ENCODE measurements at regions of chr7 and their contacts with region 1.

Region 1: DNA sequence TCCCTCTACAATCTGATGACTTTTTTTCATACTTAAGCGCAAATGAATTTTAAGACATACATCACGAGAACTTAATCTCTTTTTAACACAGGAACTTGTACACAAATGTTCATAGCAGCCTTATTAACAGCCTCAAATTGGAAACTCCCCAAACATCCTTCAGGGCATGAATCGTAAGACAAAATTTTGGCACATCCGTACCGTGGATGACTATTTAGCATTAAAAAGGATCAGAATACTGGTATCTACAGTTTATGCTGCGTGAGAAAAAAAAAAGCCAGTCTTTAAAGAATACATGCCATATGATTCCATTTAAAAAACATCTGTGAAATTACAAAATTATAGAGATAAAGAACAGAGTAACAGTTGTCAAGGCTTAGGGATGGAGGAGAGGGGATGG is 46.8 kb downstream of the PDE1C start:
- DNase-seq: no peak
- H3K4me3 ChIP-seq: no peak overlapping the region
- H3K27ac ChIP-seq: no peak overlapping the region
- H3K4me1 ChIP-seq: no peaks in the 10 kb centered on the region
- H3K27me3 ChIP-seq: no peaks in the 10 kb centered on the region
- CTCF ChIP-seq: no peak
- POLR2A ChIP-seq: no peak

Region 2: DNA sequence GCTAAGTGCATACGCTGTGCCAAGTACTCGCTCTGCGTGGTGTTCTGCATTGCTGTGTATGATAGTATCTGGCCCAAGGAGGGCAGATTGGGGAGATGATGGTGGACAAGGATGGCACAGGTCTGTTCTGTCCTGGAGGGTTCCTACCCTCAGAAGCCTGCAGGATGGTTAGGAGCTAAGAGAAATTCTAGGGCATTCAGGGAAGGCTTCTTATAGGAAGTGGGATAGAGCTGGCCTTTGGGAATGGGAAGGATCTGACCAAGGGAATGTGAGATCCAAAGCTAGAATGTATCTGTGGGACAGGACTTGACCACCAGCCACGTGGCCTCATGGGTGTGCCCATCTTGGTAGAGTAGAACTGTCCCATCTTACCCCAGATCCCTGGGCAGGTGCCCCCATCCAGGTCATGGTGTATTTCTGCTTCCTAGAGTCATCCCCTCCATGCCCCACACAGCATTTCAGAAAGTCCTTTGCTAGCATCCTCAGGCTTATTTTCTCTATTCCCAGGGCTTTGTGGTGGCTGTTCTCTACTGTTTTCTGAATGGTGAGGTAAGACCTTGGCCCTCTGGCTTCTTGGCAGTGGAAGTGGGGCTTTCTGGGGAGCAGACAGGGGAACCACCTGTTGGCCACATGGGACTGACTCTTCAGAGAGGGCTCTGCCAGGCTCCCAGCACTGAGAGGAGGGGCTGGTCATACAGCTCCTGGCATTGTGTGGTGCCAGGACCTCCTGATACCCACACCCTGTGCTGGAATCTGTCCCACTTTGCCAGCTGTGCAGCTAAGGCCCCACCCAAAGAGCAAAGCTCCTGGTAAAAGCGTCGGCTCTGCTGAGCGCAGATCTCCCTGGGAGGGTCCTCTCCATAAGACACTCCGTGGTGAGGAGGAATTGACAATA is 918.8 kb before region 1 on chr7:
- intact Hi-C with region 1: loop called (anchors 5 kb)
- DNase-seq: no peak
- H3K4me3 ChIP-seq: no peak overlapping the region
- H3K27ac ChIP-seq: no peak overlapping the region
- H3K4me1 ChIP-seq: no peaks in the 10 kb centered on the region
- H3K27me3 ChIP-seq: no peaks in the 10 kb centered on the region
- CTCF ChIP-seq: no peak
- POLR2A ChIP-seq: no peak

Region 3: GRCh38 chr7:31175672-31176071 is 847.7 kb before region 1 on chr7:
- intact Hi-C with region 1: no loop called
- DNase-seq: no peak
- H3K4me3 ChIP-seq: no peak overlapping the region
- H3K27ac ChIP-seq: no peak overlapping the region
- H3K4me1 ChIP-seq: no peaks in the 10 kb centered on the region
- H3K27me3 ChIP-seq: peaks cover 0 to 3% of the 10 kb centered on the region in 2 donors
- CTCF ChIP-seq: no peak
- POLR2A ChIP-seq: no peak

Region 4: GRCh38 chr7:31997423-31997822 is 26.0 kb before region 1 on chr7:
- intact Hi-C with region 1: loop called (anchors 2 kb)
- DNase-seq: no peak
- H3K4me3 ChIP-seq: no peak overlapping the region
- H3K27ac ChIP-seq: no peak overlapping the region
- H3K4me1 ChIP-seq: no peaks in the 10 kb centered on the region
- H3K27me3 ChIP-seq: no peaks in the 10 kb centered on the region
- CTCF ChIP-seq: no peak
- POLR2A ChIP-seq: no peak

Region 5: DNA sequence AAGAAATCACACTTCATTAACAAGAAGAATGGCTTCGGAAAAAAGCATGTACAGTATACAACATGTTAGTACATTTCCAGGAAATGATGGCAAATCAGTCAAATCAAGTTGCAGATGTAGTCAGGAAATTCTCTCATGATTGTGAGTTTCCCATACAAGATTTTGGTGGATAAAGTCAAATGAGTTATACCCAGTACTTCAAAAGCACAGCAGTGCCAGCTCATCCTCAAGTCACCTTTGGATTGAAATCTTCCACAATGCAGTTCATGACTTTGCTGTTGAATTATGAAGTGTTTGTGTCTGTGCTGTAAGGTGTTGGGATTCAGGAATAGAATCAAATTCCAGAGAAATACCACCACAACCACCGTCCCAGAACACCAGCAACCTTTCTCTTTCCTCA is 1580.7 kb after region 1 on chr7:
- intact Hi-C with region 1: no loop called
- DNase-seq: no peak
- H3K4me3 ChIP-seq: no peak overlapping the region
- H3K27ac ChIP-seq: no peak overlapping the region
- H3K4me1 ChIP-seq: no peaks in the 10 kb centered on the region
- H3K27me3 ChIP-seq: no peaks in the 10 kb centered on the region
- CTCF ChIP-seq: no peak
- POLR2A ChIP-seq: no peak